Activated CD8-positive, alpha-beta memory T cell treated with anti-CD3 and anti-CD28 coated beads, Interleukin-2, amount 10 ng/mL, durations not matched to agents 7 days and 5 days (primary cell): ENCODE measurements at regions of chr17 and their contacts with region 1.

Region 1: DNA sequence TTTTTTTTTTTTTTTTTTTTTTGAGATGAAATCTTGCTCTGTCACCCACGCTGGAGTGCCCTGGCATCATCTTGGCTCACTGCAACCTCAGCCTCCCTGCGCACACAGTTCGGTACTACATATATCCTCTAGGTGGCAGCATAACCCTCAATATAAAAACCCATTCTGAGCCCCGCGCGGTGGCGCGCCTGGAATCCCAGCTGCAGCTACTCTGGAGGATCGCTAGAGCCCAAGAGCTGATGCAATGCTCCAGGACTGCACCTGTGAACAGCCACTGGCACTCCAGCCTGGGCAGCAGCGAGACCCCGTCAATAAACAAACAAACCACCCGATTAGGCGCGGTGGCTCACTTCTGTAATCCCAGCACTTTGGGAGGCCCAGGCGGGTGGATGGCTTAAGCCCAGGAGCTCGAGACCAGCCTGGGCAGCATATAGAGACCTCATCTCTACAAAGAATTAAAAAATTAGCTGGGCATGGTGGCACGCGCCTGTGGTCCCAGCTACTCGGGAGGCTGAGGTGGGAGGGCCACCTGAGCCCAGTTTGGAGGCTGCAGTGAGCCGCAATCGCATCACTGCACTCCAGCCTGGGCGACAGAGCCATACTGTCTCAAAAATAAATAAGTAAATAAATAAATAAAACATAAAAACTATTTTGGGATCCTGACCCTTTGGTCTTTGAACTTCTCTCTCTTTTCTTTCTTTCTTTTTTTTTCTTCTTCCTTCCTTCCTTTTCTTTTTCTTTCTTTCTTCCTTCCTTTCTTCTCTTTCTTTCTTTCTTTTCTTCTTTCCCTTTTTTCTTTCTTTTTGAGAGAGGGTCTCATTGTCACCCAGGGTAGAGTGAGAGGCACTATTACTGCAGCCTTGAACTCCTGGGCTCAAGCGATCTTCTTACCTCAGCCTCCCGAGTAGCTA is 15.4 kb upstream of the AKAP10 start:
- DNase-seq: peak; percentile 80
- ATAC-seq: peak; percentile 97
- H3K4me3 Mint-ChIP-seq: no peak overlapping the region
- H3K27ac Mint-ChIP-seq: no peak overlapping the region
- H3K4me1 Mint-ChIP-seq: peaks cover 7% of the 10 kb centered on the region
- H3K27me3 Mint-ChIP-seq: peaks cover 17% of the 10 kb centered on the region

Region 2: DNA sequence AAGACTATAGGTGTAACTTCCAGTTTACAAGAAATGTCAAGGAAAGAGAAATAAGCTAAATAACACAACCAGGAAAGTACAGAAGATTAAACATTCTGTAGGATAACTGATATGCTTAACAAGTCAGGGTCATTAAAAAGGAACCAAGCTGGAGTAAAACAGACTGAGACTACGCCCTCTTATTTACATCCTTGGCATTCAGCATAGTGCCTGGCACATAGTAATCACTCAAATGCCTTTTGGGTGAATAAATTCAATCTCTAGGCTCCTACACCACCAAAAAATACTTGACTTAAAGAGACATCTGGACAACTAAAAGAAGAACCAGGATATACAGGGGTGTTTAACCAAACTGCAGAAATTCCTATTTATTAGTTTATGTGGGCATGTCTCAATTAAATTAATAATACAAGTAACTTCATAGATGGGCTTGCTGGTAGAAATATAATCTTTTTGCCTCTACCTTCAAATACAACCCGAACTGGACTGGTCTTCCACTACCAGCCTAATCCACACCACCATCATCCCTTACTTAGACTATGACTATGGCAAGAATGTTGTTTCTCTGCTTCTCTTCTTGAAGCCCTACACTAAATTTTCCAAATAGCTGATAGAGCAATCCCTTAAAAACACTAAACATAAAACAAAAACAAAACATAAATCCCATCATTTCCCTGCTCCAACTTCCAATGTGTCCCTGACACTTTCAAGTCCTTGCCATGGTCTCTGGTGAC is 77.6 kb before region 1 on chr17:
- CTCF ChIA-PET with region 1: no interaction called
- DNase-seq: no peak
- ATAC-seq: no peak
- H3K4me3 Mint-ChIP-seq: no peak overlapping the region
- H3K27ac Mint-ChIP-seq: no peak overlapping the region
- H3K4me1 Mint-ChIP-seq: peaks cover 2% of the 10 kb centered on the region
- H3K27me3 Mint-ChIP-seq: no peaks in the 10 kb centered on the region

Region 3: DNA sequence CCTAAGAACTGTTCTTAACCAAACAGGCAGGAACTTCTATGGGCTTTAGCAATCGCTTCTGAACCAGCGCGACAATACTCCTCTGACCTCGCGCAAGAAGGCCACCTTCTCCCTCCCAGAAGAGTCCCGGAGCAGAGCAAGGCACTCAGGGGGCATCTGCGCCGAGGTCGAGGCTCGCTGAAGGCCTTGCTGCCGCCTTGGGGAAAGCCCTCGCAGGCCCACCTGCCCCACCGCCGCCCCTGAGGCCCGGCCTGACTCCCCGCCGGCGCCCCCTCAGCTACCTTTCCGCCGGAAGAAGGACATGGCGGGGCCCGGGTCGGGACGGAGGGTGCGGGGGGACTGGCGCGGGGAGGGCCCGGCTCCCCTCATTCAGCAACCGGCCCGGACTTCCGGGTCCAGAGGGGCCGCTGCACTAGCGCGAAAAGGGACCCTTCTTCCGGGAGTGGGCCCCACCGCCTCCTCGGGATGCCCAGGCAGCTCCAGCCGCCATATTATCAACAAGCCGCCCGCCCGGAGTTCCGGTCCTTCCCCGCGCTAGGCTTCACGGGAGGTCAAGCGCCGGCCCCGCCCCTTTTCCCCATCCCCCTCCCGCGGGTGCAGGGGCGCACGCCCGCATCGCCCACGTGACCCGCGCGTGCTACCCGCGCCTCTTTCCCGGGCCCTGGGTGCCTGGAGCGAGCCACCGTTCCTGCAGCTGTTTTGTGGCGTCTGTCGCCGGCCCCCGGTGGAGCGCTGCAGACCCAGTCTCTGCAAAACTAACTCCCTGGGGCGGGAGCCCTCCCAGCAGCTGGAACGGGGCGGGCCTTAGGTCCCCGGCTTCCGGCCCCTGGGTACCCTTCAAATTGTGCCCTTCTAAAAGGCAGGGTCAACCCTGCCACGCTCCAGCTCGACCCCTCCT is 15.5 kb before region 1 on chr17 and contains the start of gene AKAP10:
- CTCF ChIA-PET with region 1: interaction called, 11 read pairs
- DNase-seq: peak; percentile 96
- ATAC-seq: peak; percentile 90
- H3K4me3 Mint-ChIP-seq: peak within 1 kb of the TSS; percentile 94
- H3K27ac Mint-ChIP-seq: peak within 1 kb of the TSS; percentile 98
- H3K4me1 Mint-ChIP-seq: peaks cover 48% of the 10 kb centered on the region
- H3K27me3 Mint-ChIP-seq: no peaks in the 10 kb centered on the region
- total RNA-seq, gene AKAP10: 34.3 to 44.6 TPM

Region 4: GRCh38 chr17:20114466-20114865 is 121.4 kb after region 1 on chr17:
- CTCF ChIA-PET with region 1: interaction called, 58 read pairs
- DNase-seq: no peak
- ATAC-seq: no peak
- H3K4me3 Mint-ChIP-seq: no peak overlapping the region
- H3K27ac Mint-ChIP-seq: no peak overlapping the region
- H3K4me1 Mint-ChIP-seq: peaks cover 2% of the 10 kb centered on the region
- H3K27me3 Mint-ChIP-seq: no peaks in the 10 kb centered on the region

Region 5: GRCh38 chr17:20121359-20122253 is 128.5 kb after region 1 on chr17:
- CTCF ChIA-PET with region 1: interaction called, 58 read pairs
- DNase-seq: peak; percentile 73
- ATAC-seq: peak; percentile 64
- H3K4me3 Mint-ChIP-seq: no peak overlapping the region
- H3K27ac Mint-ChIP-seq: no peak overlapping the region
- H3K4me1 Mint-ChIP-seq: peaks cover 2% of the 10 kb centered on the region
- H3K27me3 Mint-ChIP-seq: no peaks in the 10 kb centered on the region